Caco-2 (cell line): ENCODE measurements at regions of chr19 and their contacts with region 1.

Region 1: GRCh38 chr19:19776041-19777008 is 43.4 kb upstream of the ZNF14 start:
- DNase-seq: peak; percentile 99
- H3K4me3 ChIP-seq: peak overlapping the region; percentile 72
- H3K4me3 Mint-ChIP-seq: peak overlapping the region; percentile 98
- H3K27ac Mint-ChIP-seq: peak overlapping the region; percentile 95
- H3K4me1 ChIP-seq: peaks cover 12% of the 10 kb centered on the region
- H3K4me1 Mint-ChIP-seq: peaks cover 17% of the 10 kb centered on the region
- H3K27me3 ChIP-seq: no peaks in the 10 kb centered on the region
- H3K27me3 Mint-ChIP-seq: no peaks in the 10 kb centered on the region
- CTCF ChIP-seq: no peak

Region 2: DNA sequence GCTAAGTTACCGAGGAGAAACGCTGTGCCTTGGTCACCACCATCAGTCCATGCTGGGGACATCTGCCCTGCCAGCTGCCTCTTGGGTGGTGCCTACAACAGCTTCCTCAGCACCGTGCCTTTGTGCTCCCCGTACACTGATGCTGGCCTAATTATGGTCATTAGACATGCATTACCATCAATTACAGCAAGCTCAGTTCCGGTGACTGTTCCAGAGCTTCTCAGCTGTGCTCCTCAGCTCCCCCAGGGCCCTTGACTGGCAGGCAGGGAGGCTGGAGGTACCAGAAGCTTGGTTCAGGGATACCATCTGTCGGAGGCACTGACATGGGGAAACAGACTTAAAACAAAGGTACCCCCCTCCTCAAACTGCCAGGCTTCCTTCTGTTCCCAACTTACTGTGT is 198.1 kb before region 1 on chr19:
- CTCF ChIA-PET with region 1: no interaction called
- POLR2A ChIA-PET with region 1: no interaction called
- intact Hi-C with region 1: no loop called
- DNase-seq: no peak
- H3K4me3 ChIP-seq: no peak overlapping the region
- H3K4me3 Mint-ChIP-seq: no peak overlapping the region
- H3K27ac Mint-ChIP-seq: no peak overlapping the region
- H3K4me1 ChIP-seq: no peaks in the 10 kb centered on the region
- H3K4me1 Mint-ChIP-seq: peaks cover 7% of the 10 kb centered on the region
- H3K27me3 ChIP-seq: no peaks in the 10 kb centered on the region
- H3K27me3 Mint-ChIP-seq: no peaks in the 10 kb centered on the region
- CTCF ChIP-seq: no peak

Region 3: GRCh38 chr19:19652456-19653295 is 123.6 kb before region 1 on chr19:
- CTCF ChIA-PET with region 1: no interaction called
- POLR2A ChIA-PET with region 1: no interaction called
- intact Hi-C with region 1: no loop called
- DNase-seq: no peak
- H3K4me3 ChIP-seq: no peak overlapping the region
- H3K4me3 Mint-ChIP-seq: no peak overlapping the region
- H3K27ac Mint-ChIP-seq: no peak overlapping the region
- H3K4me1 ChIP-seq: no peaks in the 10 kb centered on the region
- H3K4me1 Mint-ChIP-seq: no peaks in the 10 kb centered on the region
- H3K27me3 ChIP-seq: no peaks in the 10 kb centered on the region
- H3K27me3 Mint-ChIP-seq: no peaks in the 10 kb centered on the region
- CTCF ChIP-seq: no peak

Region 4: DNA sequence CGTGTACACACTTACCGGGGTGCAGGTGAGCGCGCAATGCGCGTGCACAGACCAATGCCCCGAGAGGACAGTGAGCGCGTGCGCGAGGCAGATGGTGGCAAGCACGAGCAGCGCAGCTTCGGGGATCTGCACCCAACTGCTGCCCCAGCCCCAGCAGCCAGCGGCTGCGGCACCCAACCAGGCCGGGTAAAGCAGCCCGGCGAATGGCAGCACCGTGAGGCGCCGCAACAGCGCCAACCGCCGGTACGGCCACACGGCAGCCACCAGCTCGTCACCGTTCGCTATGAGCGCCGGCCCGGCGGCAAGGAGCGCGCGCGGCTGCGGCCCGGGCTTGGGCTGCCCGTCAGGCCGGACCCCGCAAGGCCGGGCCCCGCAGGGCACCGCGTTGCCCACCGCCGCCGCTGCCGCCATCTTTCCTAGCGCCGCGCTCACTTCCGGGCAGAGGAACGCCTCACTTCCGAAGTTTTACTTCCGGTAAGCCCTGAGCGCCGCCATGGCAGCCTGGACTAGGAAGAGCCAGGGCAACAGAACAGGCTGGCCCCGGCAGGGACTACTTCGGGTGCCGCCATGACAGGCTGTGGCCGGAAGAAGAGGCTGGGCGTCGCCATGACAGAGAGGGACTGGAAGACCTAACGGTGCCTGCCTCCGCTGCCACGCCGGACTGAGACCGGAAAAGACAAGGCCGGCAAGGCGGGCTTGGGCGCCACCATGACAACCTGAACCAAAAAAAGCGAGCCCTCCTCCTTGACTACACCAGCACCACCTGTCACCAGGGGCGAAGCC is 112.9 kb before region 1 on chr19 and contains the start of gene ATP13A1:
- CTCF ChIA-PET with region 1: interaction called, 3 read pairs
- POLR2A ChIA-PET with region 1: interaction called, 5 read pairs
- intact Hi-C with region 1: loop called (anchors 1 kb)
- DNase-seq: peak; percentile 93 to 97
- H3K4me3 ChIP-seq: peak within 1 kb of the TSS; percentile 99
- H3K4me3 Mint-ChIP-seq: peak within 1 kb of the TSS; percentile 82
- H3K27ac Mint-ChIP-seq: peak within 1 kb of the TSS; percentile 93
- H3K4me1 ChIP-seq: no peaks in the 10 kb centered on the region; the same call in 1 of the 2 replicates
- H3K4me1 Mint-ChIP-seq: no peaks in the 10 kb centered on the region
- H3K27me3 ChIP-seq: no peaks in the 10 kb centered on the region
- H3K27me3 Mint-ChIP-seq: no peaks in the 10 kb centered on the region
- CTCF ChIP-seq: no peak
- total RNA-seq, gene ATP13A1: 83.0 and 93.1 TPM in 2 replicates

Region 5: DNA sequence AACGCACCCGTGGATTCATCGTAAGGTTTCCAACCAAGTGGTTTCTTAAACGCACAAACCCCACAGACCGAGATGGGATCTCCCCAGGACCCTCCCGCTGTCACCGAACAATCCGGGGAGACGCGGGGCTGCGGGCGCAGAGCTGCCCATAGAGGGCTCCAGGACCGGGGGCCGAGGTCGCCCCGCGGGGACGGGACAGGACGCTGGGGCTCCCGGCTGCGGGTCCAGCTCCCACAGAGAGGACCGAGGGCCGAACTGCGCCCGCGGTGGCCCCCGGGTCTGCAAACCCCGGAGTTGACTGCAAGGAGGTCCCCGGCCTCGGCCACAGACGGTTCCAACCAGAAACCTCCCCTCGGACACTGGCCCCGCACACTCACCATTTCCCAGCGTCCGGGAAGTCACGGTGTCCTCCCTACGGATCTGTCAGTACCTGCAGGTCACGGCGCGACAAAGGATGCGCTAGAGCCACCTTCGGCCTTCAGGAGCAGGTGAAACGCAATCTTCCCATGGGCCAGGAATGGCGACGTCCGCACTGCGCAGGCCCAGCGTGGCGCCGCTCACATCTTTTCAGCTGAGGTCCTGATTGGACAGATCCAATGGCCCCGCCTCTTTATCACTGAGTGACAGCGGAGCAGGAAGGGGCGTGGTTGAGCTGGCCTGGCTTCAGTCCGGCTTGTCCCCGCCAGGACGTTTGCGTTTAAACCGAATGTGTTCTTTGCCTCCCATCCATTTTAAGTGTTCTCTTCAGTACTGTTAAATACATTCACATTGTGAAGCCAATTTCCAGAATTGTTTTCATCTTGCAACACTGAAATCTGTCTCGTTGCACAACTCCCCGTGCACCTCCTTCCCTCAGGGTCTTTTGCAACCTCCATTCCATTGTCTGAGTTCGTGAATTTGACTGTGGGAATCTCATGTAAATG is 43.5 kb before region 1 on chr19 and contains the start of gene ZNF14:
- CTCF ChIA-PET with region 1: interaction called, 8 read pairs
- POLR2A ChIA-PET with region 1: interaction called, 15 read pairs
- intact Hi-C with region 1: loop called (anchors 1 kb)
- DNase-seq: peak; percentile 96 to 97
- H3K4me3 ChIP-seq: peak within 1 kb of the TSS; percentile 98
- H3K4me3 Mint-ChIP-seq: peak within 1 kb of the TSS; percentile 90
- H3K27ac Mint-ChIP-seq: peak within 1 kb of the TSS; percentile 82
- H3K4me1 ChIP-seq: no peaks in the 10 kb centered on the region; the same call in 1 of the 2 replicates
- H3K4me1 Mint-ChIP-seq: no peaks in the 10 kb centered on the region
- H3K27me3 ChIP-seq: no peaks in the 10 kb centered on the region
- H3K27me3 Mint-ChIP-seq: no peaks in the 10 kb centered on the region
- CTCF ChIP-seq: peak; percentile 20 to 32
- total RNA-seq, gene ZNF14: 4.5 and 4.9 TPM in 2 replicates

Region 6: GRCh38 chr19:19900729-19901444 is 124.6 kb after region 1 on chr19 and contains the start of gene ZNF93:
- CTCF ChIA-PET with region 1: no interaction called
- POLR2A ChIA-PET with region 1: interaction called, 6 read pairs
- intact Hi-C with region 1: loop called (anchors 2 kb)
- DNase-seq: peak; percentile 94 to 96
- H3K4me3 ChIP-seq: peak within 1 kb of the TSS; percentile 64
- H3K4me3 Mint-ChIP-seq: peak within 1 kb of the TSS; percentile 98
- H3K27ac Mint-ChIP-seq: peak within 1 kb of the TSS; percentile 97
- H3K4me1 ChIP-seq: peaks cover 5% of the 10 kb centered on the region; the same call in 1 of the 2 replicates
- H3K4me1 Mint-ChIP-seq: no peaks in the 10 kb centered on the region
- H3K27me3 ChIP-seq: no peaks in the 10 kb centered on the region
- H3K27me3 Mint-ChIP-seq: no peaks in the 10 kb centered on the region
- CTCF ChIP-seq: no peak
- total RNA-seq, gene ZNF93: 6.3 and 7.5 TPM in 2 replicates